CD8-positive, alpha-beta T cell (primary cell): ENCODE measurements at regions of chr12 and their contacts with region 1.

Region 1: DNA sequence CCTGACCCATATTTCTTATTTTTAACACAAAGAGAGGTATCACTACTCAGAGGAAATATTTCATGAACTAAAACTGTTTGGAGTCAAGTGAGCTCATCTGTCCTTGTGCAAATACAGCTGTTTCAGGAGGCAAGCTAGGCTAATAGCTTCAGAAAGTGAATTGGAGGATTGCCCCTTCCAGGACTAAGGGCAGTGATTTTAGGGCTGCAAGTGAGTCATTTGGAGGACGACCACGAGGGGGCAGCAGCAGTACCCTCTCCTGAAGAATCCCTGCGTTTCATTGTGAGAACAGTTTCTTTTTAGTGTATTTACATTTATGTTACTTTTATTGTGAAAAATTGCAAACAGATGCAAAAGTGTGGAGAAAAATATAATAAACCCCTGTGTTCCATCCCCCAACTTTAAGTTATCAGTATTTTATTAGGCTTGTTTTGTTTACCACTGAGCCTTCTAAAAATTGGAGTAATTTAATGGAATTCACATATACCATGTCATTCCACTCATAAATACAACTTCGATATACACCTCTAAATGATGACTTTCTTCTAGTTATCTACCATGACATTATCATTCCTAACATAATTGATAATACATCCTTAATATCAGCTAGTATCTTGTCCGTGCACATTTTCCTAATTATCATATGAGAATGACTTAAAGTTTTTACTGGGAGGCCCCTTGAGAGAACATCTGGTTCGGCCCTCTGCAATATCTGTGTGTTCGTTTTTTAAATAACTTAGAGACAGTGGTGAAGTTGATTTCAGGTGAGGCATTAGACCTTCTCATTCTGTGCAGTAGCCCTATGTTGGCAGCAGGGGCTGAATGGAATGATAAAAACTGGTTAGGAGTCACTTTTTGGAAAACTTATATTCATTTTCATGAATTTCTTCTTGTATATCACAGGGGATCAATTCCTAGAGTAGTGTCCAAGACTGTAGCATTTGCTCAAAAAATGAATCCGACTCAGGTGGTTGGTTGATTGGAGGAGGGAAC is 13.7 kb downstream of the FOXJ2 start:
- DNase-seq: peak; percentile 69 to 90 (median 84)
- ATAC-seq: peak; percentile 94
- H3K4me3 ChIP-seq: no peak overlapping the region
- H3K4me3 Mint-ChIP-seq: no peak overlapping the region
- H3K27ac ChIP-seq: no peak overlapping the region
- H3K27ac Mint-ChIP-seq: no peak overlapping the region
- H3K4me1 ChIP-seq: no peaks in the 10 kb centered on the region
- H3K4me1 Mint-ChIP-seq: peaks cover 7% of the 10 kb centered on the region
- H3K27me3 ChIP-seq: no peaks in the 10 kb centered on the region
- H3K27me3 Mint-ChIP-seq: no peaks in the 10 kb centered on the region
- CTCF ChIP-seq: peak; percentile 77

Region 2: GRCh38 chr12:8026291-8026900 is 19.9 kb before region 1 on chr12:
- CTCF ChIA-PET with region 1: interaction called, 41 read pairs
- POLR2A ChIA-PET with region 1: interaction called, 8 read pairs
- intact Hi-C with region 1: no loop called
- DNase-seq: peak; percentile 90 to 99 (median 94)
- ATAC-seq: peak; percentile 89
- H3K4me3 ChIP-seq: peak overlapping the region; percentile 84 to 93
- H3K4me3 Mint-ChIP-seq: peak overlapping the region; percentile 95
- H3K27ac ChIP-seq: peak overlapping the region; percentile 97 to 100
- H3K27ac Mint-ChIP-seq: peak overlapping the region; percentile 100
- H3K4me1 ChIP-seq: peaks cover 6% of the 10 kb centered on the region
- H3K4me1 Mint-ChIP-seq: peaks cover 21% of the 10 kb centered on the region
- H3K27me3 ChIP-seq: no peaks in the 10 kb centered on the region
- H3K27me3 Mint-ChIP-seq: no peaks in the 10 kb centered on the region
- CTCF ChIP-seq: no peak

Region 3: GRCh38 chr12:8032242-8033152 is 13.8 kb before region 1 on chr12 and contains the start of gene FOXJ2:
- CTCF ChIA-PET with region 1: interaction called, 41 read pairs
- POLR2A ChIA-PET with region 1: interaction called, 8 read pairs
- intact Hi-C with region 1: loop called in 1 of 2 experiments (anchors 1 kb)
- DNase-seq: peak; percentile 70 to 90 (median 77)
- ATAC-seq: peak; percentile 84
- H3K4me3 ChIP-seq: peak within 1 kb of the TSS; percentile 89 to 94
- H3K4me3 Mint-ChIP-seq: peak within 1 kb of the TSS; percentile 88
- H3K27ac ChIP-seq: peak within 1 kb of the TSS; percentile 84 to 86
- H3K27ac Mint-ChIP-seq: peak within 1 kb of the TSS; percentile 90
- H3K4me1 ChIP-seq: peaks cover 47% of the 10 kb centered on the region
- H3K4me1 Mint-ChIP-seq: peaks cover 51% of the 10 kb centered on the region
- H3K27me3 ChIP-seq: no peaks in the 10 kb centered on the region
- H3K27me3 Mint-ChIP-seq: no peaks in the 10 kb centered on the region
- CTCF ChIP-seq: no peak
- total RNA-seq, gene FOXJ2: 38.9 to 39.3 TPM

Region 4: GRCh38 chr12:8057839-8058238 is 11.6 kb after region 1 on chr12:
- CTCF ChIA-PET with region 1: interaction called, 46 read pairs
- POLR2A ChIA-PET with region 1: interaction called, 3 read pairs
- intact Hi-C with region 1: loop called in 1 of 2 experiments (anchors 1 kb)
- DNase-seq: no peak
- ATAC-seq: no peak
- H3K4me3 ChIP-seq: no peak overlapping the region
- H3K4me3 Mint-ChIP-seq: no peak overlapping the region
- H3K27ac ChIP-seq: no peak overlapping the region
- H3K27ac Mint-ChIP-seq: peak overlapping the region; percentile 57
- H3K4me1 ChIP-seq: no peaks in the 10 kb centered on the region
- H3K4me1 Mint-ChIP-seq: no peaks in the 10 kb centered on the region
- H3K27me3 ChIP-seq: no peaks in the 10 kb centered on the region
- H3K27me3 Mint-ChIP-seq: no peaks in the 10 kb centered on the region
- CTCF ChIP-seq: no peak

Region 5: DNA sequence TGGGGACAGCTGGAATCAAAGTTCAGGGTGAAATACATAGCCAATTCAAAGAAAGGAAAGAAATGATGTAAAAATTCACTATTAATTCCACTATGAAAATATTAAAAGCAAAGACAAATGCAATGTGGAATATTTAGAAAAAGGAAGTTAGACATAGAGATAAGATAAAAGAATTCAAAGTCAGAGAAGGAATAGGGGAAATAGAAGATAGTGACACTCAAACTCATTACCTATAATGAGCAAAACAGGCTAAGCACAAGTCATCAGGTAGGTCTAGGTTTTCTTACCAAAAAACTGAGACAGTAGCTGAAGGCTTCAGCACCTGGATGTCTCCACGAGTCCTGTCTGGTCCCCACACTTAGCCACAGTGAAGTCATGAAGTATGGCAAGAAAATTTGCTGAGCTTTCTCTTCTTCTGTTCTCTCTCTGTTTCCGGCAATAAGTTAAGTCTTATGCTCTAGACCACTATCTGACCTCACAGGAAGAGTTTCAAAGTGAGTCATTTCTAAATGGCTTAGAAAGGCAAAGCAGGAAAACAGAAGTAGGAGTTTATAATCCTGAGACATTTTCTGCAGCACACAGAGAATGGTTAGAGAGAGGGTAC is 19.8 kb after region 1 on chr12 and contains the start of gene C3AR1:
- CTCF ChIA-PET with region 1: interaction called, 46 read pairs
- POLR2A ChIA-PET with region 1: interaction called, 3 read pairs
- intact Hi-C with region 1: loop called in 1 of 2 experiments (anchors 1 kb)
- DNase-seq: peak in 7 of 9 experiments; percentile 30 to 87 (median 57)
- ATAC-seq: peak; percentile 97
- H3K4me3 ChIP-seq: peak within 1 kb of the TSS; percentile 5 to 33
- H3K4me3 Mint-ChIP-seq: peak within 1 kb of the TSS; percentile 53
- H3K27ac ChIP-seq: peak within 1 kb of the TSS; percentile 22 to 80
- H3K27ac Mint-ChIP-seq: peak within 1 kb of the TSS; percentile 87
- H3K4me1 ChIP-seq: peaks cover 22% of the 10 kb centered on the region
- H3K4me1 Mint-ChIP-seq: peaks cover 22% of the 10 kb centered on the region
- H3K27me3 ChIP-seq: no peaks in the 10 kb centered on the region
- H3K27me3 Mint-ChIP-seq: no peaks in the 10 kb centered on the region
- CTCF ChIP-seq: no peak
- total RNA-seq, gene C3AR1: 1.8 to 2.8 TPM

Region 6: DNA sequence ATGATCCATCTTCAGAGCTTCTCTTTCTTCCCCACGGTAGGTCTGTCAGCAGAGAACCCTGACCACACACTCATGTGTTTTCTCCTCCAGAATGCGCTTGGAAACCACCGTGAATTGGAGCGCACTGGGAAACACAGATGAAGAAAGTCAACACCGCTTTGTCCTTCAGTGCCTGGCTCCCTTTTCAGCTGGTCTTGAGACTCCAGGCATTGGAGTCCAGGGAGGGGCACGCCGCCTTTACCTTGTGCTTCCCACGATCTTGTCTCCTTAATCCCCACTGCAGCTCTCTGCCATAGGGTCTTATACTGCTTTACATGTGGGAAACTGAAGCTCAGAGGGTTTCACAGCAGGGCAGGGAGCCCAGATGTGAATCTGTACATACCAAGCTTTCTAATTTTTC is 180.1 kb after region 1 on chr12:
- CTCF ChIA-PET with region 1: no interaction called
- POLR2A ChIA-PET with region 1: no interaction called
- intact Hi-C with region 1: loop called in 1 of 2 experiments (anchors 5 kb)
- DNase-seq: peak in 1 of 9 experiments; percentile 36
- ATAC-seq: no peak
- H3K4me3 ChIP-seq: no peak overlapping the region
- H3K4me3 Mint-ChIP-seq: no peak overlapping the region
- H3K27ac ChIP-seq: no peak overlapping the region
- H3K27ac Mint-ChIP-seq: no peak overlapping the region
- H3K4me1 ChIP-seq: no peaks in the 10 kb centered on the region
- H3K4me1 Mint-ChIP-seq: no peaks in the 10 kb centered on the region
- H3K27me3 ChIP-seq: no peaks in the 10 kb centered on the region
- H3K27me3 Mint-ChIP-seq: peaks cover 13% of the 10 kb centered on the region
- CTCF ChIP-seq: no peak

Region 7: DNA sequence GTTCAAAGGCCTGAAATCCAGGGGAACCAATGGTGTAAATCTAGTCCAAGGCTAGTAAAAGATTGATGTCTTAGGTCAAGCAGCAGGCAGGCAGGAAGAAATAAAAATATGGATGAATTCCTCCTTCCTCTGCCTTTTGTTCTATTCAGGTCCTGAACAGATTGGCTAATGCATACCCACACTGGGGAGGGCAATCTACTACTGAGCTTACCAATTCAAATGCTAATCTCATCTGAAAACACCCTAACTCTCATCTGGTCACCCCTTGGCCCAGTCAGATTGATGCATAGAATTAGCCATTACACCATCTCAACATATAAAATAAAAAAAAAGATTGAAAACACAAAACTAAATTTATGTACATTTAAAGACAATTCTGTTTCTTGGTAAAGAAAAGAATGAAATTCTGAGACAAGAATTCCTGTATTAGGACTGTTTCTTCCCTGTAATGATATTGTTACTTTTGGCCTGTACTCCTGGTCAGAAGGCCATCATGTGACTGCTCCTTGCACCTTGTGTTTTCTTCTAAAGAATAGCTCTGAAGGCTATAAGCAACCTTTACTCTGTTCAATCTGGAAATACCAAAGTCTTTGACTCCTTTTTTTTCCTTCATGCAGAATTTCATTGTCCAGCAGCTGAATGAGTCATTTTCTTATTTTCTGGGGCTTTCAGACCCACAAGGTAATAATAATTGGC is 429.4 kb after region 1 on chr12:
- CTCF ChIA-PET with region 1: no interaction called
- POLR2A ChIA-PET with region 1: no interaction called
- intact Hi-C with region 1: no loop called
- DNase-seq: no peak
- ATAC-seq: no peak
- H3K4me3 ChIP-seq: no peak overlapping the region
- H3K4me3 Mint-ChIP-seq: no peak overlapping the region
- H3K27ac ChIP-seq: no peak overlapping the region
- H3K27ac Mint-ChIP-seq: no peak overlapping the region
- H3K4me1 ChIP-seq: no peaks in the 10 kb centered on the region
- H3K4me1 Mint-ChIP-seq: no peaks in the 10 kb centered on the region
- H3K27me3 ChIP-seq: no peaks in the 10 kb centered on the region
- H3K27me3 Mint-ChIP-seq: peaks cover 12% of the 10 kb centered on the region
- CTCF ChIP-seq: no peak